Caco-2 (cell line): ENCODE measurements at regions of chr12 and their contacts with region 1.

Region 1: GRCh38 chr12:68686595-68687521 is at the start of gene NUP107:
- DNase-seq: peak; percentile 99
- H3K4me3 ChIP-seq: peak within 1 kb of the TSS; percentile 88
- H3K4me3 Mint-ChIP-seq: peak within 1 kb of the TSS; percentile 91
- H3K27ac Mint-ChIP-seq: peak within 1 kb of the TSS; percentile 92
- H3K4me1 ChIP-seq: peaks cover 9% of the 10 kb centered on the region; the same call in 1 of the 2 replicates
- H3K4me1 Mint-ChIP-seq: peaks cover 12% of the 10 kb centered on the region
- H3K27me3 ChIP-seq: no peaks in the 10 kb centered on the region
- H3K27me3 Mint-ChIP-seq: no peaks in the 10 kb centered on the region
- CTCF ChIP-seq: no peak
- total RNA-seq, gene NUP107: 119 and 125 TPM in 2 replicates

Region 2: DNA sequence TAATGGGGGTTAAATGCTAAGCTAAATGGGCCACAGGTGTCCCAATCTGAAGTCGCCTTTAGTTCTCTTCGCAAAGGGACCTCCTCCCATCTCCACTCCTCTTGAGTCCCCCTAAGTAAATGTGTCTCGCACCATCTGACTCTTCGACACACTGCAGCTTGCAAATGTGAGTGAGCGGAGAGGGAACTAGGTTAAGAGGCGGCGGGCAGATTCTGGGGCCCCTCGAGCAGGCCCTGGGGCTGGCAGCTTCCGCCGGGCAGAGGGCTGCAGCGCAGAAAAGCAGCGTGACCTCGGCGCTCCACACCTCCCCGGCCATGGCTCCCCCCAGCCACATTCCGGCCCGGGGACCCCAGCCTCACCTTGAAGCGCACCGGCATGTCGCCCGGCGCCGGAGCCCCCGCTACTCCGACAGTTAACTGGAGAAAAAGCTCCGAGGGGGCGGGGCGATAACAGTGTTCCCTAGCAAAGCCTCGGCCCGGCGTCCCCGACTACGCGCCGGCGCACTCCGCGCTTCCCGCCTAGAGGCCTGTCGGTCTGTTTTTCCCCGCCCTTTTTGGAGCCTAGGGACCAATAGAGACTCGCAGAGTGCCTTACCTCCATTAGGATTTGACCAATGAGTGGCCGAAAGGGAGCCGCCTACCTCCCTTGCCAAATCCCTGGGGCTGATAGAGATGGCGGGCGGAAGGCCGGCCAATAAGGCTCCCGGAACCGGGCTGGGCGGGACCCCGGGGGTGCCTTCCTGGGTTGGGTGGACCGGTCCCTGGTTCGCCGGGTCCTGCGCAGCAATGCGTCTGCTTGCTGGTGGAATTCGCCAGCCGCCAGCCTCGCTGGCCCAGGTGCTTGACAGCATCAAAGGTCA is 354.8 kb before region 1 on chr12 and contains the start of gene MDM1:
- CTCF ChIA-PET with region 1: no interaction called
- POLR2A ChIA-PET with region 1: no interaction called
- intact Hi-C with region 1: loop called (anchors 2 kb)
- DNase-seq: peak; percentile 97 to 98
- H3K4me3 ChIP-seq: peak within 1 kb of the TSS; percentile 71
- H3K4me3 Mint-ChIP-seq: peak within 1 kb of the TSS; percentile 79
- H3K27ac Mint-ChIP-seq: peak within 1 kb of the TSS; percentile 51
- H3K4me1 ChIP-seq: peaks cover 22% of the 10 kb centered on the region; the same call in 1 of the 2 replicates
- H3K4me1 Mint-ChIP-seq: peaks cover 8% of the 10 kb centered on the region
- H3K27me3 ChIP-seq: no peaks in the 10 kb centered on the region
- H3K27me3 Mint-ChIP-seq: no peaks in the 10 kb centered on the region
- CTCF ChIP-seq: no peak
- total RNA-seq, gene MDM1: 19.0 and 22.2 TPM in 2 replicates

Region 3: GRCh38 chr12:68420225-68421010 is 266.4 kb before region 1 on chr12:
- CTCF ChIA-PET with region 1: no interaction called
- POLR2A ChIA-PET with region 1: no interaction called
- intact Hi-C with region 1: loop called (anchors 10 kb)
- DNase-seq: no peak
- H3K4me3 ChIP-seq: no peak overlapping the region
- H3K4me3 Mint-ChIP-seq: no peak overlapping the region
- H3K27ac Mint-ChIP-seq: peak overlapping the region; percentile 53
- H3K4me1 ChIP-seq: 0 out of 2 replicates have a peak, but pooled peaks cover 5% of the 10 kb centered on the region
- H3K4me1 Mint-ChIP-seq: peaks cover 18% of the 10 kb centered on the region
- H3K27me3 ChIP-seq: no peaks in the 10 kb centered on the region
- H3K27me3 Mint-ChIP-seq: no peaks in the 10 kb centered on the region
- CTCF ChIP-seq: no peak

Region 4: DNA sequence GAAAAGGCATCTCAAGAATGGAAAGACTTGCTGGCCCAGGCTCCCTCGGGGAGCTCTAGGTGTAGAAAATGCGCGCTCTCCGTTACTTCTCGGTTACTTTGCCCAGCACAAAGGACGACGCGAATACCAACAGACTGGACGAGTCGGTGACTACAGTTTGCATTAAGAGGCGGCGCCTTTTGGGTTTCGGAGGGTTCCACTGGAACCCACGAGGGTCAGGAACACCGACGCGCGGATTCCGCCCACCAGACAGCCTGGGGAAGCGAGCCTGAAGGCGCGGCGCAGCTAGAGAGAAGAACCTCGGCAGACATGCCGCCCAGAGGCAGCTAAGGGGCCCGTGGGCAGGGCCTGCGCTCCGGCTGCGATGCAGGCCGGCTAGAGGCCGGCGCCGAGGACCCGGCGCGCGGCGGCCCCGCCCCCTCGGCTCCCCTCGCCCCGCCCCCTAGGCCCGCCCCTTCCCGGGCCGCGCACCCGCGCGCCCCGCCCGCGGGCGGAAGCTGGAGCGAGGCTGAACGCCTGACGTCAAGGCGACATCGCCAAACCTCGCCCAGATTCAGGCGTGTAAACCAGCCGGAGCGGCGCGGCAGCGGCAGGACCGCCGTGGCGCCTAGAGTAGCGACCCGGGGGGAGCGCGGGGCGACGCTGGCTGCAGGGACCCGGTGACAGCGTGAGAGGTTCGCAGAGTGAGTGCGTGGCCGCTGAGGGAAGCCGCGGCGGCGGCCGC is 76.3 kb before region 1 on chr12 and contains the start of gene RAP1B:
- CTCF ChIA-PET with region 1: no interaction called
- POLR2A ChIA-PET with region 1: interaction called, 4 read pairs
- intact Hi-C with region 1: loop called (anchors 1 kb)
- DNase-seq: peak; percentile 91
- H3K4me3 ChIP-seq: peak within 1 kb of the TSS; percentile 92
- H3K4me3 Mint-ChIP-seq: peak within 1 kb of the TSS; percentile 76
- H3K27ac Mint-ChIP-seq: peak within 1 kb of the TSS; percentile 91
- H3K4me1 ChIP-seq: peaks cover 50% of the 10 kb centered on the region
- H3K4me1 Mint-ChIP-seq: peaks cover 29% of the 10 kb centered on the region
- H3K27me3 ChIP-seq: no peaks in the 10 kb centered on the region
- H3K27me3 Mint-ChIP-seq: no peaks in the 10 kb centered on the region
- CTCF ChIP-seq: no peak
- total RNA-seq, gene RAP1B: 216 and 239 TPM in 2 replicates

Region 5: GRCh38 chr12:69083689-69084088 is 396.8 kb after region 1 on chr12:
- CTCF ChIA-PET with region 1: no interaction called
- POLR2A ChIA-PET with region 1: no interaction called
- intact Hi-C with region 1: no loop called
- DNase-seq: peak in 1 of 2 experiments; percentile 35
- H3K4me3 ChIP-seq: no peak overlapping the region
- H3K4me3 Mint-ChIP-seq: no peak overlapping the region
- H3K27ac Mint-ChIP-seq: no peak overlapping the region
- H3K4me1 ChIP-seq: no peaks in the 10 kb centered on the region
- H3K4me1 Mint-ChIP-seq: peaks cover 7% of the 10 kb centered on the region
- H3K27me3 ChIP-seq: no peaks in the 10 kb centered on the region
- H3K27me3 Mint-ChIP-seq: no peaks in the 10 kb centered on the region
- CTCF ChIP-seq: no peak